Calu3 (cell line): ENCODE measurements at regions of chr1 and their contacts with region 1.

Region 1: DNA sequence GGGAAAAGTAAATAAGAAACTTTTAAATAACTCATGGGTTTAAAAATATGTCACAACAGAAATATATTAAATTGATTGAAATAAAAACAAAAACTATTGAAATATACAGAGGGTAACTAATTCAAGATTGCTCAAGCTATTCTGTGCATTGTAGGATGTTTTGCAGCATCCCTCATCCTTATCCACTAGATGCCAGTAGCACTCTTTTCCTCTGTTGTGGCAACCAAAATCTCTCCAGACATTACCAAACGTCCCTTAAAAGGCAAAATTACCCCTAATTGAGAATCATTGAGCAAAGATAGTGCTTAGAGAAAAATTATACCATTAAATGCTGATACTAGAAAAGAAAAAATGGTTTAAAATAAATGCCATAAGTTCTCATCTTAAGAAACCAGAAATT is 682.6 kb downstream of the RWDD3 start:
- DNase-seq: peak; percentile 5
- H3K4me3 Mint-ChIP-seq: no peak overlapping the region
- H3K27ac Mint-ChIP-seq: no peak overlapping the region
- H3K4me1 Mint-ChIP-seq: peaks cover 22% of the 10 kb centered on the region
- H3K27me3 Mint-ChIP-seq: no peaks in the 10 kb centered on the region
- CTCF ChIP-seq: no peak

Region 2: DNA sequence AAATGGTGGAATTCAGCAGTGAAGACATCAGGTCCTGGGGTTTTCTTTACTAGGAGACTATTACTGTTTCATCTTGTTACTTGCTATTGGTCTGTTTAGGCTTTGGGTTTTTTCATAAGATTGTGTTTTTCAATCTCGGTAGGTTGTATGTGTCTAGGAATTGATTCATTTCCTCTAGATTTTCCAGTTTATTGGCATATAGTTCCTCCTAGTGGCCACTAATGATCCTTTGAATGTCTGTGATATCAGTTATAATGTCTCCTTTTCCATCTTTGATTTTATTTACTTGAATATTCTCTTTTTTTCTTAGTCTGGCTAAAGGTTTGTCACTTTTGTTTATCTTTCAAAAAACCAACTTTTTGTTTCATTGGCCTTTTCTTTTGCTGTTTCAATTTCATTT is 449.6 kb before region 1 on chr1:
- CTCF ChIA-PET with region 1: no interaction called
- intact Hi-C with region 1: loop called (anchors 10 kb)
- DNase-seq: no peak
- H3K4me3 Mint-ChIP-seq: no peak overlapping the region
- H3K27ac Mint-ChIP-seq: no peak overlapping the region
- H3K4me1 Mint-ChIP-seq: peaks cover 23% of the 10 kb centered on the region
- H3K27me3 Mint-ChIP-seq: no peaks in the 10 kb centered on the region
- CTCF ChIP-seq: no peak

Region 3: GRCh38 chr1:96049759-96050409 is 133.3 kb after region 1 on chr1:
- CTCF ChIA-PET with region 1: no interaction called
- intact Hi-C with region 1: no loop called
- DNase-seq: no peak
- H3K4me3 Mint-ChIP-seq: no peak overlapping the region
- H3K27ac Mint-ChIP-seq: no peak overlapping the region
- H3K4me1 Mint-ChIP-seq: no peaks in the 10 kb centered on the region
- H3K27me3 Mint-ChIP-seq: no peaks in the 10 kb centered on the region
- CTCF ChIP-seq: no peak